GM10248 (cell line): ENCODE measurements at regions of chr19 and their contacts with region 1.

Region 1: DNA sequence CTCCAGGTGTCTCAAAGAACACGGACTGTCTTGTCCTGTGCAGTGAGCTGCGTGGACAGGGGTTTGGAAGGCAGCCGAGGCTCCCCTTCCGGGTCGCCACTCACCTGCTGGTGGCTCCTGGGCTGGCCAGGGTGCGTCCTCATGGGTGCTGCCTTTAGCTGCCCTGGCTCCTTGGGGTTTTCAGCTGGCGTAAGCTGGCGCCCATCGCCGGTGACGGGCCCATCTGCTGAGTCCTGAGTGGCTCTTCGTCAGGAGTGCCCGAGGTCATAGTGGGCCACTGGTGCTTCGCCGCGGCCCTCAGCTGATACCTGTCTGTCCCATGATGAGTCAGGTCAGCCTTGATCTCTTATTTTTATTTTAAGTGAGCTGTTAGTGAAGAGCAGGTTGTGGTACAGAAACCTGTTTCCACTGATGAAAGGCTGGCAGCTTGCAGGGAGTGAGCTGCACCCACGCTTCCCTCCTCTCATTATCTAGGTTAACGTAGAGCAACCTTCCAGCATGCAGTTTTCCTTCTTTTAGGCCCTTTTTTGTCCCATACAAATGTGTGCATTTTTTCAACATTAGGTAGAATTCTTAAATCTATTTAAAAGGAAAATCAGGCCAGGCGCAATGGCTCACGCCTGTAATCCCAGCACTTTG is 18.4 kb downstream of the EPN1 start:
- DNase-seq: no peak
- CTCF ChIP-seq: no peak

Region 2: DNA sequence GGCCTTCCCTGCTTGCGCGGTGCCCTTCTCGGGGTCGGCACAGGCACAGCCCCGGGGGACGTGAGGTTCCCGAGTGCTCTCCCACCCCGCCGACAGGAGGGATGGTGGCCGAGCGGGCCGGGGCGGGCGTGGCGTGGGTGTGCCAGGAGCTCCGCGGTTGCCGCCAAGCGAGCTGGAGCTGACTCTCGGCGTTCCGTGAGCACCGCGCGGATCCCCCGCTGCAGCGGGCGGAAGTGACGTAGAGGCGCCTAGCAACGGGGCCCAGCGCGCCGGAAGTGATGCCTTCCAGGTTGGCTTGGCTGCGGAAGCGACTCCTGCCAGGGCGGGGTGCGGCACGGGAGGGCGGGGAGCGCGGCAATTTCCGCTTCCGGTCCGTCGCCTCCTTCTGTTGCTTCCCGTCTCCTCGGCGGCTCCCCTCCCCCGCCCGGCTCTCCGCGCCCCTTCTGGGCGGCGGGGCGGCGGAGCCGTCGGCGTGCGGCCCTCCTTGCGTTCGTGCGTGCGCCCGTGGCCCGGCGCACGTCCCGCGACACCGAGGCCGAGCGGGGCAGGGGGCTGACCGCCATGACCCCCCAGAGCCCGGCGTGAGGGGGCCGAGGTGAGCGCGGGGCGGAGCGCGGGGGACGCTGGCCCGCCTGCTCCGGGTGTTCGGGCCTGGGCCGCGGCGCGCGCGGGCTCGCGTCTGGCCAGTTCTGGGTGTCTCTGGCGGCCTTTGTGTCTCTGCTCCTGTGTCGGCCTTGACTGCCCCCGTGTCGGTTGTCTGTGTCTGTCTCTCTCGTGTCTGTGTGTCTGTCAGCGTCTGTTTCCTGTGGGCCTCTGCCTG is 18.4 kb before region 1 on chr19 and contains the start of gene EPN1:
- CTCF ChIA-PET with region 1: interaction called, 4 read pairs
- POLR2A ChIA-PET with region 1: interaction called, 12 read pairs
- DNase-seq: peak; percentile 99
- CTCF ChIP-seq: no peak